ENCODE measurements at regions of chr22 and their contacts with region 1.

Region 1: DNA sequence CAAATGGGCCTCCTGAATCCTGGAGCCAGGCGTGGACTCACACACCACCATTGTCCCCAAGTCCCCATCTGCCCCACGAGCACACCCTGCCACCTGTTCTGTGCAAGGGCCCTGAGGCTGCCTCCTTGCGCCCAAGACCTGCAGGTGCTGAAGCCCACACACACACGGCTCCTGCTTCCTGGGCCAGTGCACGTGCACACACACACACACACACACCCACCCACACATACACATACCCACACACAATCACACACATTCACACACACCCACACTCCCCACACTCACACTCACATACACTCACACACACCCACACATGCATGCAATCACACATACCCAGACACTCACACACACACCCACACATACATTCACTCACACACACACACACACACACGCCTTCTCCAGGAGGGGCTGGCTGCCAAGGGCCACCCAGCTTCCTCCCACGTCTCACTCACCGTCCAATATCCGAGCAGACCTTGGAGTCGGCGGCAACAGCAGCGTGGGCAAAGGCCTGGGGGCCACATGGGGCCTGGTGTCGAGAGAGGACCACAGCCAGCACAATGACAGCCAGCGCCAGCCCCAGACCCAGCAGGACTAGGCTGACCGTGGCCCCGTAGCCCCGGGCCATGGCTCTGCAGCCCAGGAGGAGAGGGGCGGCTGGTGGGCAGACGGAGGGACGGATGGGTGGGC is 638 bp downstream of the GGT5 start:
- DNase-seq: peak in 1 of 14 experiments; percentile 3
- ATAC-seq: no peak
- H3K4me3 ChIP-seq: no peak overlapping the region
- H3K4me3 Mint-ChIP-seq: peak overlapping the region; percentile 63
- H3K27ac ChIP-seq: no peak overlapping the region
- H3K27ac Mint-ChIP-seq: peak overlapping the region; percentile 36
- H3K4me1 ChIP-seq: peaks cover 30% of the 10 kb centered on the region
- H3K4me1 Mint-ChIP-seq: peaks cover 29% of the 10 kb centered on the region
- H3K27me3 ChIP-seq: no peaks in the 10 kb centered on the region
- H3K27me3 Mint-ChIP-seq: no peaks in the 10 kb centered on the region
- CTCF ChIP-seq: no peak

Region 2: GRCh38 chr22:24095826-24096757 is 148.2 kb before region 1 on chr22:
- CTCF ChIA-PET with region 1: no interaction called
- POLR2A ChIA-PET with region 1: no interaction called
- intact Hi-C with region 1: no loop called
- DNase-seq: no peak
- ATAC-seq: no peak
- H3K4me3 ChIP-seq: no peak overlapping the region
- H3K4me3 Mint-ChIP-seq: no peak overlapping the region
- H3K27ac ChIP-seq: no peak overlapping the region
- H3K27ac Mint-ChIP-seq: no peak overlapping the region
- H3K4me1 ChIP-seq: no peaks in the 10 kb centered on the region
- H3K4me1 Mint-ChIP-seq: no peaks in the 10 kb centered on the region
- H3K27me3 ChIP-seq: no peaks in the 10 kb centered on the region
- H3K27me3 Mint-ChIP-seq: no peaks in the 10 kb centered on the region
- CTCF ChIP-seq: no peak

Region 3: DNA sequence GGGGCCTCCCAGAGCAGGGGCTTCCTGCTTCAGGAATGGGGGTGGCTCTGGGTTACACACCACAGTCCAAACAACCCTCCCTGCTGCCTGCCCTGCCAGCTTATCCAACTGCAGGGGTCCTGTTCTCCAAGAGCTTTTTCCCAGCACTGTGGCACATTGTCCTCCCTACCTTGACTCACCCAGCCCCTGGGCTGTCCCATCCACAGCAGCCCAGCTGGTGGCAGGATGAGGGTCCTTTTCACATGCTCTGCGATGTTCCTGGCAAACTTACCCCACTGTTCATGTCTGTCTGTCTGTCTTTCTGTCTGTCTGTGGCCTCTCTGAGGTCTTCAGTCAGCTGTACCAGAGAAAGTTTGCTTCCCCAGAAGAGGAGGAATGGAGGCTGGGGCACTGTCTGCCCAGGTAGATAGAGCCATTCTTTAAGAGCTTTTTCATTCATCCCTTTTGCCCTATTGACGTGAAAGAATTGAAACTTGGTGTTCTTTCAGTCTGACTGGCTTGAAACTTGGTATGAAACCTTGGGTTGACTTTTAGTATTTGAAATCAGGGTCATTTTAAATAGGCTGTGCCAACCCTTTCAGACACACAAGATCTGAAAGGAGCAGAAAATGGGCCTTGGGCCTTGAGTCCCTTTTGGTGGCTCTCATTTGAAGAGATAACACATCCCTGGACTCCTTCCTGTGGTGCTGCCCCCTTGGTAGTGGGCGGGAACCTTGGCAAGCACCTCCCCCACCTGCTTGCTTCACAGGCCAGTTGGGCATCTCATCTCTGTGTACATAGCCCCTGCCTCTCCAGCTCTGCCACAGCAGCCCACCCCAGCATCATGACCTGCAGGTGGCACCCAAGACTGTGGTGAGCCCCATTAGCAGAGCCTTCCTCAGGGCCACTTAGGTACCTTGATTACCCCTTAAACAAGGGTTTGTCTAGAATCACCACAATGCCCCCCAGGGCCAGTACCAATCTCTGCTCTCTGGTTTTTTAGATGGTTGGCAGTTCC is 137.6 kb before region 1 on chr22:
- CTCF ChIA-PET with region 1: no interaction called
- POLR2A ChIA-PET with region 1: no interaction called
- intact Hi-C with region 1: loop called in 1 of 2 experiments (anchors 1 kb)
- DNase-seq: peak in 13 of 14 experiments; percentile 15 to 65 (median 40)
- ATAC-seq: peak; percentile 56
- H3K4me3 ChIP-seq: no peak overlapping the region
- H3K4me3 Mint-ChIP-seq: no peak overlapping the region
- H3K27ac ChIP-seq: no peak overlapping the region
- H3K27ac Mint-ChIP-seq: no peak overlapping the region
- H3K4me1 ChIP-seq: peaks cover 4% of the 10 kb centered on the region
- H3K4me1 Mint-ChIP-seq: no peaks in the 10 kb centered on the region
- H3K27me3 ChIP-seq: no peaks in the 10 kb centered on the region
- H3K27me3 Mint-ChIP-seq: no peaks in the 10 kb centered on the region
- CTCF ChIP-seq: peak; percentile 46

Region 4: DNA sequence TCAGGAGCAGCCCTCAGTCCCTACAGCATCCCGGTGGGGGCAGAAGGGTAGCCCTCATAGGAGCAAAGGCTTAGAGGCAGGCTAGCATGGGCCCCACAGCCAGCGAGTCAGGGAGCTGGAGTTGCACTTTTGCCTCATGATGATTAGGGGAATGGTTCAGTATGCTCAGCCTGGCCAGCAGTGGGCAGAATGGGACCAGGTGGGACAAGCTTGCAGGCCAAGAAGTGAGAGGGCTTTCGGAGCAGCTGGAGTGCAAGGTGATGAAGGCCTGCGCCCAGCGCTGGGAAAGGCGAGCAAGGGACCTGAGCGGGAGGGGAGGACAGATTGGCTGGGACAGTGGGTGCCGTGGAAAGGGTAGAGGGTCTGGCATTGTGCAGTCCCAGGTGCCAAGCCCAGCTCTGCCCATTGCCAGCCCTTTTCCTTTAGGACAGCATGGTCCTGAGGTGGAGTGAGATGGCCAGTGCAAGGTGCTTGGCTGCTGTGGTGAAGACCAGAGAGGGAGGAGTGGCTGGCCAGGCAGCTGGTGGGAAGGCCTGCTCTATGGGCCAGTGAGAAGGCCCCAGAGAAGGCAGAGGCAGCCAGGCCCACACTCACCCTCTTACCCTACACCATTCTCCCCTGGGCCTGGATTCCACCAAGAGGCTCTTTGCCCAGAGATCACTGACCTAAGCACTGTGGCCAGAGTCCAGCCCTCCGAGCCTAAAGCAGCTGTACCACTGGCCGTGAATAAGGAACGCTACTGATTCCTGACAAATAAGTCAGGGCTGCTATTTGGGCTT is 110.9 kb before region 1 on chr22:
- CTCF ChIA-PET with region 1: no interaction called
- POLR2A ChIA-PET with region 1: interaction called, 3 read pairs
- intact Hi-C with region 1: loop called in 1 of 2 experiments (anchors 5 kb)
- DNase-seq: peak; percentile 30 to 73 (median 48)
- ATAC-seq: peak; percentile 50
- H3K4me3 ChIP-seq: no peak overlapping the region
- H3K4me3 Mint-ChIP-seq: no peak overlapping the region
- H3K27ac ChIP-seq: no peak overlapping the region
- H3K27ac Mint-ChIP-seq: peak overlapping the region; percentile 92
- H3K4me1 ChIP-seq: peaks cover 18% of the 10 kb centered on the region
- H3K4me1 Mint-ChIP-seq: peaks cover 23% of the 10 kb centered on the region
- H3K27me3 ChIP-seq: no peaks in the 10 kb centered on the region
- H3K27me3 Mint-ChIP-seq: no peaks in the 10 kb centered on the region
- CTCF ChIP-seq: peak; percentile 58

Region 5: GRCh38 chr22:24189249-24190158 is 54.7 kb before region 1 on chr22:
- CTCF ChIA-PET with region 1: no interaction called
- POLR2A ChIA-PET with region 1: no interaction called
- intact Hi-C with region 1: loop called (anchors 1 to 10 kb)
- DNase-seq: peak in 11 of 14 experiments; percentile 16 to 64 (median 27)
- ATAC-seq: peak; percentile 78
- H3K4me3 ChIP-seq: no peak overlapping the region
- H3K4me3 Mint-ChIP-seq: no peak overlapping the region
- H3K27ac ChIP-seq: no peak overlapping the region
- H3K27ac Mint-ChIP-seq: no peak overlapping the region
- H3K4me1 ChIP-seq: peaks cover 6% of the 10 kb centered on the region
- H3K4me1 Mint-ChIP-seq: no peaks in the 10 kb centered on the region
- H3K27me3 ChIP-seq: no peaks in the 10 kb centered on the region
- H3K27me3 Mint-ChIP-seq: no peaks in the 10 kb centered on the region
- CTCF ChIP-seq: peak; percentile 47

Measured in CD4-positive, alpha-beta T cell (primary cell).